ENCODE measurements at regions of chr20 and their contacts with region 1.

Region 1: GRCh38 chr20:39049684-39050554 is 87.8 kb downstream of the DHX35 start:
- DNase-seq: peak; percentile 67 to 83 (median 76)
- H3K4me3 ChIP-seq: peak overlapping the region; percentile 73 to 74
- H3K4me3 Mint-ChIP-seq: peak overlapping the region; percentile 83 to 93 (median 88)
- H3K27ac ChIP-seq: peak overlapping the region; percentile 45
- H3K27ac Mint-ChIP-seq: peak overlapping the region in 6 of 7 donors; percentile 30 to 93 (median 89)
- H3K4me1 ChIP-seq: peaks cover 11% of the 10 kb centered on the region
- H3K4me1 Mint-ChIP-seq: peaks cover 6 to 12% (median 9%) of the 10 kb centered on the region in 4 donors
- H3K27me3 ChIP-seq: no peaks in the 10 kb centered on the region
- H3K27me3 Mint-ChIP-seq: peaks cover 0 to 6% of the 10 kb centered on the region in 2 donors

Region 2: DNA sequence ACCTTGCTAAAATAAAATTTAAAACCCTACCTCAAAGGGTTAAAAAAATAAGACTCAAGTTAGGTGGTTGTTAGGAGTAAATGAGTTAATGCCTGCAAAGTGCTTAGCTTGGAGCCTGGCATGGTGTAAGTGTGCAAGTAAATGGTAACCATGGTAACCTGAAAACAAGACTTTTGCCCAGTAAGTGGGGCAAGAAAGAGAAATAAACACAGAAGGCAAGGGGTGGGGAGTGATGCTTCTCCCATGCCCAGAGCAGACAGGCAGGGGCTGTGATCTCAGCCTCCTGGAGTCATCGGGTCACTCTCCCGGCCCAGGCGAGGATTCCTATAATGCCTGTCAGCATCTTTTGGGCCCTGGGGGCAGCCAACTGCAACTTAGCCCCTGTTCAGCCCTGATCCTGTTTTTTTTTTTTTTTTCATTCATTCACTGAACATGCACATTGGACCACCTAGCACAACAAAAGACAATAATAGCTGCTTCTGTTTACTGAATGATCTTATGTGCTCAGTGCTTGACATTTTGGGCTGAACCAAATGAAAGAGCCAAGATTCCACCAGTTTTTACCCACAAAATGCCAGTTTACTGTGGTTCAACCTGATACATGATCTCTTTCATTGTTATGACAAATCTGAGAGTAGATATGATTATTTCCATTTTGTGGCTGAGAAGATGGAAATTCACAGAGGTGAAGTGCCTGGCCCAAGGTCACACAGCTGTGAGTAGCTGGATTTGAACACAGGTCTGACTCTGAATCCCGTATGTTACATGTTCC is 384.6 kb before region 1 on chr20:
- CTCF ChIA-PET with region 1: interaction called, 12 read pairs
- POLR2A ChIA-PET with region 1: no interaction called
- intact Hi-C with region 1: no loop called
- DNase-seq: no peak
- H3K4me3 ChIP-seq: no peak overlapping the region
- H3K4me3 Mint-ChIP-seq: no peak overlapping the region
- H3K27ac ChIP-seq: no peak overlapping the region
- H3K27ac Mint-ChIP-seq: no peak overlapping the region
- H3K4me1 ChIP-seq: no peaks in the 10 kb centered on the region
- H3K4me1 Mint-ChIP-seq: no peaks in the 10 kb centered on the region
- H3K27me3 ChIP-seq: peaks cover 12% of the 10 kb centered on the region
- H3K27me3 Mint-ChIP-seq: peaks cover 36 to 43% of the 10 kb centered on the region in 2 donors

Region 3: DNA sequence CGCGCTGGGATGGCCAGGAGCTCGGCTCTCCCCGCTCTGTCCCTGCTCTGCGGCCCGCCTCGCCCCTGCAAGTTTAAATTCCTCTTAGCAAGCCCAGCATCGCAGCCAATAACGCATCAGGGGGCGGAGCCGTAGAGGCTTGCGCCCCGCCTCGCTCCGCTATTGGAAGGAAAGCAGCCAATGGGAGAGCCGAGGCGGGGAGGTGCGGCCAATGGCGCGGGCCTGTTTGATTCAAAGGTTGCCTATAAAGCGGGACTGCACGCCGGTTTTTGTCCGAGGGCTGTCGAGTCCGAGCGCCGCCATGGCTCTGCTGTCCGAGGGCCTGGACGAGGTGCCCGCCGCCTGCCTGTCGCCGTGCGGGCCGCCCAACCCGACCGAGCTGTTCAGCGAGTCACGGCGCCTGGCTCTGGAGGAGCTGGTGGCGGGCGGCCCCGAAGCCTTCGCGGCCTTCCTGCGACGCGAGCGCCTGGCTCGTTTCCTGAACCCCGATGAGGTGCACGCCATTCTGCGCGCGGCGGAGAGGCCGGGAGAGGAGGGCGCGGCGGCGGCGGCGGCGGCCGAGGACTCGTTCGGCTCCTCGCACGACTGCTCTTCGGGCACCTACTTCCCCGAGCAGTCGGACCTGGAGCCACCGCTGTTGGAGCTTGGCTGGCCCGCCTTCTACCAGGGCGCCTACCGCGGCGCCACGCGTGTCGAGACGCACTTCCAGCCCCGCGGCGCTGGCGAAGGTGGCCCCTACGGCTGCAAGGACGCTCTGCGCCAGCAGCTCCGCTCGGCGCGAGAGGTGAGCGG is 123.6 kb before region 1 on chr20 and contains the start of gene FAM83D:
- CTCF ChIA-PET with region 1: interaction called, 7 read pairs
- POLR2A ChIA-PET with region 1: interaction called, 5 read pairs
- intact Hi-C with region 1: loop called (anchors 1 kb)
- DNase-seq: peak; percentile 93 to 96 (median 95)
- H3K4me3 ChIP-seq: peak within 1 kb of the TSS; percentile 57 to 70
- H3K4me3 Mint-ChIP-seq: peak within 1 kb of the TSS; percentile 81 to 87 (median 82)
- H3K27ac ChIP-seq: peak within 1 kb of the TSS; percentile 51
- H3K27ac Mint-ChIP-seq: peak within 1 kb of the TSS; percentile 32 to 93 (median 66)
- H3K4me1 ChIP-seq: peaks cover 33% of the 10 kb centered on the region
- H3K4me1 Mint-ChIP-seq: peaks cover 21 to 37% (median 27%) of the 10 kb centered on the region in 4 donors
- H3K27me3 ChIP-seq: no peaks in the 10 kb centered on the region
- H3K27me3 Mint-ChIP-seq: no peaks in the 10 kb centered on the region
- total RNA-seq, gene FAM83D: 1.4 to 1.5 TPM

Region 4: DNA sequence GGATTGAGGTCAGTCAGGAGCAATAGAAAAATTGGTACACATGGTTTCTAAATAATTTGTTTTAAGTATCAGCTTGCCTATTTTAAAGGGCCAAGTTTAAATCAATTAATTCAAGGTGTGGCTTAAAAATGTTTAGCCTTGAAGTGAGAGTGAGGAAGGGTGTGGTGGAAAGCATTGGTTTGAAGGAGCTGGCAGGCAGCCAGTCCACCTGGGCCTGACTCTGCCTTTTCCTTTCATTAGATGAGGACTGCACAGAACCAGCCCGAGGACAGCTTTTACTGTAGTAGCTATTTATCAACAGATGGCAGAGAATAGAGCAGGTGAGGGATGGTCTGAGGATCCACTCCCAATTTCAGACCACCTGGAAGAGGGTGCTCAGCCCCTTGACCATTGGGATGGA is 45.4 kb before region 1 on chr20:
- CTCF ChIA-PET with region 1: interaction called, 16 read pairs
- POLR2A ChIA-PET with region 1: interaction called, 4 read pairs
- intact Hi-C with region 1: no loop called
- DNase-seq: peak; percentile 58 to 63 (median 62)
- H3K4me3 ChIP-seq: no peak overlapping the region
- H3K4me3 Mint-ChIP-seq: peak overlapping the region in 7 of 8 donors; percentile 0 to 81 (median 63)
- H3K27ac ChIP-seq: no peak overlapping the region
- H3K27ac Mint-ChIP-seq: peak overlapping the region in 6 of 7 donors; percentile 53 to 75 (median 64)
- H3K4me1 ChIP-seq: peaks cover 28% of the 10 kb centered on the region
- H3K4me1 Mint-ChIP-seq: peaks cover 24 to 47% (median 32%) of the 10 kb centered on the region in 4 donors
- H3K27me3 ChIP-seq: no peaks in the 10 kb centered on the region
- H3K27me3 Mint-ChIP-seq: no peaks in the 10 kb centered on the region

Region 5: DNA sequence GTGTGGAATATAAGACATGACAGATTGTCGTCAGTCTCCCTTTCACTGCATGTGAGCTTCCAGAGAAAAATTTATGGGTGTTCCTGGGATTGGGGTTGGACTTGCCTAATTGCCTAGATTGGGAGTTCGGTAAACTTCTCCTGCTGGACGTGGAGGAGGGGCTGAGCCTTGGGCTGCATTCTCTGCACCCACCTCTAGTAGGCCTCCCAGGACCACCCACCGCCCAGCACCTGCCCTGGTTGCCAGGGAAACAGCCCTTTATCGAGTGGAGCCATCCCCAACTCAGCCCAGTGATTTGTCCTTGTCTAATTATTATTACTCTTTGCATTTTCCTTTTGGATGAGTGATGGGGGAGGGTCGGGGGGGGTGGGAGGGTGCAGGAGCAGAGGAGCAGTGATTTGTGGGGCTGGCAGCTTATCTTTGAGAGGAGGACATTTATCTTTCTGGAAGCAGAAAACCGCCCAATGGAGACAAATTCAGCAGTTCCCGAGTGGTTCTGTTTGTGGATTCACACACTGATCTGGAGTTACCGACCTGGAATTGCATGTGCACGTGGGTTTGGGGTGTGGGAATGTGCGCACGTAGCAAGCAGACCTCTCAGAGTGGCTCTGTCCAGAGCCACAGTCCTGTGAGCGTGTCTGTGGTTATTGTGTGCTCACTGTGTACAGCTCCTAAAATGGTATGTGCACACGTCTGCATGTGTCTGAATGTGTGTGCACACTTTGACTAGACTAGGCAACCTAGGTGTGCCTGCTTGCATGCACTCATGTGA is 16.7 kb after region 1 on chr20:
- CTCF ChIA-PET with region 1: interaction called, 11 read pairs
- POLR2A ChIA-PET with region 1: no interaction called
- intact Hi-C with region 1: no loop called
- DNase-seq: no peak
- H3K4me3 ChIP-seq: no peak overlapping the region
- H3K4me3 Mint-ChIP-seq: no peak overlapping the region
- H3K27ac ChIP-seq: no peak overlapping the region
- H3K27ac Mint-ChIP-seq: no peak overlapping the region
- H3K4me1 ChIP-seq: no peaks in the 10 kb centered on the region
- H3K4me1 Mint-ChIP-seq: no peaks in the 10 kb centered on the region
- H3K27me3 ChIP-seq: no peaks in the 10 kb centered on the region
- H3K27me3 Mint-ChIP-seq: peaks cover 18 to 20% of the 10 kb centered on the region in 2 donors

Region 6: GRCh38 chr20:39155971-39156370 is 106.1 kb after region 1 on chr20:
- CTCF ChIA-PET with region 1: no interaction called
- POLR2A ChIA-PET with region 1: no interaction called
- intact Hi-C with region 1: no loop called
- DNase-seq: no peak
- H3K4me3 ChIP-seq: no peak overlapping the region
- H3K4me3 Mint-ChIP-seq: no peak overlapping the region
- H3K27ac ChIP-seq: no peak overlapping the region
- H3K27ac Mint-ChIP-seq: no peak overlapping the region
- H3K4me1 ChIP-seq: no peaks in the 10 kb centered on the region
- H3K4me1 Mint-ChIP-seq: no peaks in the 10 kb centered on the region
- H3K27me3 ChIP-seq: no peaks in the 10 kb centered on the region
- H3K27me3 Mint-ChIP-seq: peaks cover 8 to 32% of the 10 kb centered on the region in 2 donors

Measured in CD4-positive, alpha-beta memory T cell (primary cell).